Activated CD4-positive, alpha-beta T cell treated with anti-CD3 and anti-CD28 coated beads for 36 hours (primary cell): ENCODE measurements at regions of chrX and their contacts with region 1.

Region 1: GRCh38 chrX:49155900-49156837 is 6.4 kb upstream of the MAGIX start:
- DNase-seq: peak; percentile 90
- ATAC-seq: peak; percentile 88
- H3K4me3 Mint-ChIP-seq: peak overlapping the region; percentile 87
- H3K27ac Mint-ChIP-seq: peak overlapping the region; percentile 96
- H3K4me1 Mint-ChIP-seq: peaks cover 11% of the 10 kb centered on the region
- H3K27me3 Mint-ChIP-seq: no peaks in the 10 kb centered on the region

Region 2: DNA sequence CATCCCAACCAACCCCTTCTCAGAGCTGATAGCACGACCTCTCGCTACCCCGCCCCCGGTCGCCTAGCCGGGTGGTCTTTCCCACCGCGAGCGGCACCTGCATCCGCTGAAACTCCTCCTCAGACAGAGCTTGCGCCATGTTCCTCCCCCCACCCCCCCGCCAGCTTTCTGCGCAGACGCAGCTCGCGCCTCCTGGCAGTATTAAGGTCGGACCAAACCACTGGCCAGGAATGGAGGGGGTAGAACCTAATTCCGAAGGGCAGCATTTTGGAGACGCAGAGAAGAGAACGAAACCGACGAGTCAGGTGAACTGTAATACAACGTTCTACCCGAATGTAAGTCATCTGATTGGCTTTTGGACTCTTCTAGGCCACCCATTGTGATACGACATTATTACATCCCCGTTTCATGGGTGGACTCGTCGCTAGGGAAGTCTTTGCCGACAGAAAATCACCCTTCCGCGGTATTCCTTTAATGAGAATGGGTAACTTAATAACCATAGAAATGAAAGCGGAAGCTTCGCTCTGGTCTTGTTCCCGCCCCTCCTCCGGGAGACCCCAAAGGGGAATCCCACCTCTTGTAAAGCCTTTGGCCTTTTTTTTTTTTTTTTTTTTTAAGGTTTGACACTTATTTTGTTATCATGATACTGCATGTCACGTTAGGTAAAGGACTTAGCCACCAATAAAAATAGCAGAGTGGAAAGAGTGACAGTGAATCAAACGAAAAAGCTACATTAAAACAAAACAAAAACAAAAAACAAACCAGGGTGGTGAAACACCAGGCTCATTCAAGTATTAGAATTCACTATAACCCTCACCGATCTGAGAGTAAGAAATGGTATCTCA is 153.9 kb before region 1 on chrX and contains the start of gene GRIPAP1:
- CTCF ChIA-PET with region 1: no interaction called
- POLR2A ChIA-PET with region 1: no interaction called
- intact Hi-C with region 1: loop called in 1 of 2 experiments (anchors 1 kb)
- DNase-seq: peak; percentile 87
- ATAC-seq: peak; percentile 82
- H3K4me3 Mint-ChIP-seq: peak within 1 kb of the TSS; percentile 97
- H3K27ac Mint-ChIP-seq: peak within 1 kb of the TSS; percentile 98
- H3K4me1 Mint-ChIP-seq: peaks cover 34% of the 10 kb centered on the region
- H3K27me3 Mint-ChIP-seq: no peaks in the 10 kb centered on the region
- total RNA-seq, gene GRIPAP1: 57.8 to 63.3 TPM

Region 3: DNA sequence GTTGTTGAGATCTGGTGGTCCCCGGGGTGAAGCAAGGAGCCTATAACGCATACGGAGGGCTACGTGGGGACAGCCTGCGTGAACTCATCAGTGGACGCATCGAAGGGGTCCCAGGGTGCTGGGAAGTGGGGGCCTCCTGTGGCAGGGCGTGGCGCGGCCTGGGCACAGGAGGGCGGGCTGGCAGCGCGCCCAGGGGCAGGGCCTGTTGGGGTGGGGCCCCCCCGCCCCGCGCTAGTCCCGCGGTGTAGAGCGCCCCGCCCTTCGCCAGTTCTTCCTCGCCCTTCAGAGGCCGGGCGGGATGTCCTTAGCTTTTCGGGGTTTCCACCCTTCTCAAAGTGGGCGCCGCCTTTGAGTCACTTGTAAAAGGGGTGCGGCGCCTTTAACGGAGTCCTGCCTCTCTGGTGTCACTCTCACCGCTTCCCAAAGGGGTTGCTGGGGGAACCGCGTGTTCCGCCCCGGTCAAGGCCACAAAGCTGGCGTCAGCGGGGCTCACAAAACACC is 16.2 kb after region 1 on chrX:
- CTCF ChIA-PET with region 1: interaction called, 4 read pairs
- POLR2A ChIA-PET with region 1: interaction called, 5 read pairs
- intact Hi-C with region 1: loop called in 1 of 2 experiments (anchors 1 kb)
- DNase-seq: peak; percentile 85
- ATAC-seq: peak; percentile 78
- H3K4me3 Mint-ChIP-seq: peak overlapping the region; percentile 88
- H3K27ac Mint-ChIP-seq: peak overlapping the region; percentile 93
- H3K4me1 Mint-ChIP-seq: peaks cover 31% of the 10 kb centered on the region
- H3K27me3 Mint-ChIP-seq: no peaks in the 10 kb centered on the region

Region 4: DNA sequence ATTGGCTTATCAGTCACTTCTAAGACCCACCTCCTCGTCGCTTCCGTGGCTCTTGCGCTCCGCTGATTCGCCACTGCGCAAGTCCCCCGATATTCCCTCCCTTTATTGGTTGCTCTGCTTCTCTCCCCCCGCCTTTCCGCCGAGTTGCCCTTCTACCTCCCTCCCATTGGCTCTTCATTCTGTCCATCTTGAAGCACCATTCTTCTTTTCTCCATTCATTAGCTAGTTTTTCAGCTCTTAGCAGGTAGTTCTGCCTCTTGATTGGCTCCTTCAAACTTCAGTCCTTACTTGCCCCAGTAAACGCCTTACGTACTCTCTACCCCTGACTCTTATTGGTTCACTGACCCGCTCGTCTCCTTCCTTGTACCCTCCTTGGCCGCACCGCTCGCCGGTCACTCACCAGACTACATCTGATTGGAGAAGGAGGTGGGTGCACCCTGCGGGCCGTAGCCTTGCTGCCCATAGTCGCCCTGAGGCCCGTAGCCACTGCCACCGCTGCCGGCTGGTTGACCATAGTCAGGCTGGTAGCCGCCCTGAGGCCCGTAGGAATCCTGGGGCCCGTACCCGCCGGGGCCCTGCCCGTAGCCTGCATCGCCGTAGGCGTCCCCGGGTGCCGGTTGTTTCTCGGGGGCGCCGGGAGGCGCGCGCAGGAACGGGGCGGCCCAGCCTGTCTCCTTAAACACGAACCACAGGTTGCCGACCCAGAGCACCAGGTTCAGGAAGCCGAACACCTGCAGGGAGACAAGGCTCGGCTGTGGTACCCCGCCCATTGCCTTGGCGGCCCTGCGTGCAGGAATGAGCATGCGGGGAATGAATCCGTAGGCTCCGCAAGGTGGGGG is 35.1 kb after region 1 on chrX:
- CTCF ChIA-PET with region 1: interaction called, 5 read pairs
- POLR2A ChIA-PET with region 1: interaction called, 3 read pairs
- intact Hi-C with region 1: loop called in 1 of 2 experiments (anchors 2 kb)
- DNase-seq: peak; percentile 89
- ATAC-seq: peak; percentile 91
- H3K4me3 Mint-ChIP-seq: peak overlapping the region; percentile 96
- H3K27ac Mint-ChIP-seq: peak overlapping the region; percentile 97
- H3K4me1 Mint-ChIP-seq: peaks cover 23% of the 10 kb centered on the region
- H3K27me3 Mint-ChIP-seq: no peaks in the 10 kb centered on the region